Calu3 (cell line): ENCODE measurements at regions of chr1 and their contacts with region 1.

Region 1: GRCh38 chr1:205983925-205984725 is 19.1 kb downstream of the RAB7B start:
- DNase-seq: peak; percentile 85
- H3K4me3 Mint-ChIP-seq: peak overlapping the region; percentile 34
- H3K27ac Mint-ChIP-seq: peak overlapping the region; percentile 55
- H3K4me1 Mint-ChIP-seq: peaks cover 35% of the 10 kb centered on the region
- H3K27me3 Mint-ChIP-seq: no peaks in the 10 kb centered on the region
- CTCF ChIP-seq: peak; percentile 73

Region 2: DNA sequence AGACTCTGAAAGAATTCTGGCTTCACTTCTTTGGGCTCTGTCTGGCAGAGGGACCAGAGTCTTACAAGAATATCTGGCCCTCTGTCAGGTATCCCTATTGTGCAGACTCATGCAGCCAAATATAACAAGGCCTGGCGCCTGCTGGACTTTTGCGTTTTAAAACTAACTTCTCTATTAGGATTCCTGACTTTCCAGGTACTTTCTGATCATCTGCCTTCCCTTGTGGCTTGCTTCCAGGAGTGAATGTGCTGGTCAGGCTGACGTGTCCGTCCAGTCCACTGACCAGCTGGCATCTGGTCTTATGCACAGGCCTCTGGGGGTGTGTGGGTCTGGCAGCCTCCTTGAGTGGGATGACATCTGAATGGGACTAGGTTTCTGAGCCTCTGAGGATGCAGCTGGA is 200.2 kb before region 1 on chr1:
- CTCF ChIA-PET with region 1: no interaction called
- intact Hi-C with region 1: no loop called
- DNase-seq: no peak
- H3K4me3 Mint-ChIP-seq: no peak overlapping the region
- H3K27ac Mint-ChIP-seq: no peak overlapping the region
- H3K4me1 Mint-ChIP-seq: no peaks in the 10 kb centered on the region
- H3K27me3 Mint-ChIP-seq: no peaks in the 10 kb centered on the region
- CTCF ChIP-seq: no peak

Region 3: GRCh38 chr1:206021626-206022365 is 37.7 kb after region 1 on chr1:
- CTCF ChIA-PET with region 1: interaction called, 8 read pairs
- intact Hi-C with region 1: loop called (anchors 5 kb)
- DNase-seq: peak; percentile 66
- H3K4me3 Mint-ChIP-seq: peak overlapping the region; percentile 68
- H3K27ac Mint-ChIP-seq: peak overlapping the region; percentile 91
- H3K4me1 Mint-ChIP-seq: peaks cover 67% of the 10 kb centered on the region
- H3K27me3 Mint-ChIP-seq: no peaks in the 10 kb centered on the region
- CTCF ChIP-seq: no peak